Lower leg skin (tissue), 4 donors: ENCODE measurements at regions of chr5 and their contacts with region 1.

Region 1: GRCh38 chr5:149228618-149229297 is 42.9 kb upstream of the AFAP1L1 start:
- DNase-seq: peak in 1 of 2 donors; percentile 68
- H3K4me3 ChIP-seq: no peak overlapping the region
- CTCF ChIP-seq: peak in 1 of 3 donors; percentile 68
- POLR2A ChIP-seq: no peak

Region 2: DNA sequence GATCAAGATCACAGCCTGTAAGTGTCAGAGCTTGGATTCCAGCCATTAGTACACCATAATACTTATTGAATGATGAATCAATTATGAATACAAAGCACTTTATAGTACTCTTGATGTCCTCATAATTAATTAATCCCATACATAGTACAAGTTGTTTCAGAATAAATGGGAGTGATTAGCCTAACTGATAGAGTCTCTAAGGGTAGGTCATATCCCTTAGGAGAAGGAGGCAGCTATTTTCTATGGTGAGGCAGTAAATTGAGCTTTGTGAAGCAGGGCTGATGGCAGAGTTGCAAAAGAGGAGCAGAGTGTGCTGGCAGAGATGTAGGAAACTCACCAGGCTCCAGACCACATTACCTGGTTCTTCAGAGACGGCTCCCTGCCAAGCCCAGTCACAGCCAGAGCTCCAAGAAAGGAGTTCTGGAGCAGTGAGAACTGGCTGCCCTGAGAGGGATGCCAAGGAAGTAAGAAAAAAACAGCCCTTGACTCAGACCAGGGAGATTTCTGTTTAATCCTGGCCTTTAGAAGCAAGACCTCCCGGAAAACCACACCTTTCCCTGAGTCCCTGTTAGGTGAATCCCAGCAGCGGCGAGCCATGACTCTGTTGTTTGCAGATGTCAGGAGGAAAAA is 278.8 kb before region 1 on chr5:
- intact Hi-C with region 1: no loop called
- DNase-seq: peak in 1 of 2 donors; percentile 84
- H3K4me3 ChIP-seq: no peak overlapping the region
- CTCF ChIP-seq: no peak
- POLR2A ChIP-seq: no peak

Region 3: GRCh38 chr5:149141224-149141956 is 87.4 kb before region 1 on chr5 and contains the start of gene ABLIM3:
- intact Hi-C with region 1: loop called (anchors 10 kb)
- DNase-seq: peak; percentile 48 to 94
- H3K4me3 ChIP-seq: peak within 1 kb of the TSS; percentile 53
- CTCF ChIP-seq: peak in 1 of 3 donors; percentile 61
- POLR2A ChIP-seq: no peak
- total RNA-seq, gene ABLIM3: 4.2 to 12.3 (median 7.4) TPM

Region 4: DNA sequence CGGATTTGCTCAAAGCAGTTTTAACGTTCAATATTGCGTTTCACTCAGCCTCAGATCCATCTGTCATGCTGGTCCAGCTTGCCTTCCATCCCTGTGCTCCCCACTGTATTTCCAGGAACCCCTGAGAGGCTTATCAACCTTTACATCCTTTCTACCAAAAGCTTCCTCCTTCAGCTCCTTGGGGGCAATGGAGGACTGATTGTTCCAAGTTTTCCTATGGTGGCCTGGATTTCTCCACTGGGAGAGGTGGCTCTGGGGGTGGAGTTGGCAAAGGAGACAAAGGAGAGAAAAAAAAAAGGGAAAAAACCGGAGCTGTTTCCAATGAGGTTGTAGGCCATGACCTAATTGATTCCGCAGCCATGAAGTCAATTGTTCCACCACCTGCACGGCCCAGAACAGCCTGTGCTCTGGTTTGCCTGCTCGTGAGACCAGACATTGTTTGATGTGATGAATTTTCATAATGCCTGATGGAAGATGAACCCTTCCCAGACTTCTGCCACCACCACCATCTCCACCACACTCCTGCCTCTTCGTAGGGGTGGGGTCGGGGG is 33.3 kb before region 1 on chr5:
- intact Hi-C with region 1: no loop called
- DNase-seq: no peak
- H3K4me3 ChIP-seq: no peak overlapping the region
- CTCF ChIP-seq: no peak
- POLR2A ChIP-seq: no peak

Region 5: DNA sequence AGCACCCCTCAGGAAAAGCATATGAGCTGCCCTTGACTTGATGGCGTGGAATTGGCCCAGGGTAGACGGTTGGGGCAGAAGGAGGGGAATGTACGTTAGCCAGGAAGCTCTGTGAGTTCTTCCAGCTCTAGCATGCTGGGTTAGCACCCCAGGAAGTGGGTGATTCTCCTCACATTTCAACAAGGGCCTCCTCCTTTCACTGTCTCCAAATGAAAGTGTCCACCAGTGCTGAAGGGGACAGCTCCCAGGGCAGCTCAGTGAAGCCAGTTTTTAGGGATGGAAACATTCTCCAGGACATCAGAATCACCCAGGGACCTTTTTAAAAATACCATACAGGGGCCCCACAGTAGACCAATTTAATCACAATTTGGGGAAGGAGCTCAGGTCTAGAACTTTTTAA is 25.7 kb after region 1 on chr5:
- intact Hi-C with region 1: no loop called
- DNase-seq: no peak
- H3K4me3 ChIP-seq: no peak overlapping the region
- CTCF ChIP-seq: no peak
- POLR2A ChIP-seq: no peak